ENCODE measurements at regions of chr11 and their contacts with region 1.

Region 1: DNA sequence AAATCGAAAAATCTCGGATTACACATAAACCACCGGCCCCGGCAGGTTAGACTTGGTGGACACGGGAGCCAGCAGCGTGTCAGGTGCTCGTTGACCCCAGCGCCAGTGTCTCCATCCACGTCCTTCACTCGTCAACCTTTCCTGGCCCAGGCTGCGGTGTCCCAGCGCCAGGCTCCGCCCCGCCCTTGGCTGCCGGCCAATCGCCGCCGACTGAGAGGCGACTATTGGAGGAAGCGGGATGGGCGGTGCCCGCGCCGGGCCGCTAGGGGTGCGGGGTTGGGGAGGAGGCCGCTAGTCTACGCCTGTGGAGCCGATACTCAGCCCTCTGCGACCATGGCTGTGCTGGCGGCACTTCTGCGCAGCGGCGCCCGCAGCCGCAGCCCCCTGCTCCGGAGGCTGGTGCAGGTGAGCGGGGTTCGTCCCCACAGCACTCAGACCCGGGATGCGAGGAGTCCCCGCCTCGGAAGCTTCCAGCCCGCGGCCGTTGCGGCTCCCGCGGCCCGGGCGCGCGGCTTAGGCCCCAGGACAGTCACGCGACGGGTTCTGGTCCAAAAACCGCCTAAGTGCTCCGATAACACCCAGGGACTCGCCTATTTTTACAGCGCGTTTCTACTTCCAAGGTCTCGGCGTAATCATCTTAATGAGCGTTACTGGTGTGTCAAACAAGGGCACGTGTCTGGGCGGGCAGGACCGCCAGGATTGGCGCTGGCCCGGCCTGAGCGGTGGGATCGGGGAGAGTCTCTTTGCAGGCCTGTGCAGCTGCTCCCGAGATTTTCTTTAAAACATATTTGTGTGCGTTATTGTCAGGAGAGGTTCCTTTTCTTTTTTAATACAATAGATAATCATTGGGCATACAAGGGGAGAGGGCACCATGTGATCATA is at the start of gene ACAT1:
- DNase-seq: peak; percentile 88 to 94
- H3K4me3 ChIP-seq: peak within 1 kb of the TSS; percentile 92
- H3K27ac ChIP-seq: no peak within 1 kb of the TSS
- H3K4me1 ChIP-seq: peaks cover 12% of the 10 kb centered on the region
- H3K27me3 ChIP-seq: no peaks in the 10 kb centered on the region
- CTCF ChIP-seq: peak; percentile 62
- total RNA-seq, gene ACAT1: 31.8 and 34.4 TPM in 2 replicates

Region 2: GRCh38 chr11:107563702-107564101 is 557.8 kb before region 1 on chr11:
- CTCF ChIA-PET with region 1: no interaction called
- POLR2A ChIA-PET with region 1: no interaction called
- intact Hi-C with region 1: loop called (anchors 5 kb)
- DNase-seq: peak; percentile 20 to 60
- H3K4me3 ChIP-seq: peak overlapping the region; percentile 83; the same call in 1 of the 2 replicates
- H3K27ac ChIP-seq: peak overlapping the region; percentile 87
- H3K4me1 ChIP-seq: peaks cover 47% of the 10 kb centered on the region
- H3K27me3 ChIP-seq: no peaks in the 10 kb centered on the region
- CTCF ChIP-seq: peak; percentile 85

Region 3: DNA sequence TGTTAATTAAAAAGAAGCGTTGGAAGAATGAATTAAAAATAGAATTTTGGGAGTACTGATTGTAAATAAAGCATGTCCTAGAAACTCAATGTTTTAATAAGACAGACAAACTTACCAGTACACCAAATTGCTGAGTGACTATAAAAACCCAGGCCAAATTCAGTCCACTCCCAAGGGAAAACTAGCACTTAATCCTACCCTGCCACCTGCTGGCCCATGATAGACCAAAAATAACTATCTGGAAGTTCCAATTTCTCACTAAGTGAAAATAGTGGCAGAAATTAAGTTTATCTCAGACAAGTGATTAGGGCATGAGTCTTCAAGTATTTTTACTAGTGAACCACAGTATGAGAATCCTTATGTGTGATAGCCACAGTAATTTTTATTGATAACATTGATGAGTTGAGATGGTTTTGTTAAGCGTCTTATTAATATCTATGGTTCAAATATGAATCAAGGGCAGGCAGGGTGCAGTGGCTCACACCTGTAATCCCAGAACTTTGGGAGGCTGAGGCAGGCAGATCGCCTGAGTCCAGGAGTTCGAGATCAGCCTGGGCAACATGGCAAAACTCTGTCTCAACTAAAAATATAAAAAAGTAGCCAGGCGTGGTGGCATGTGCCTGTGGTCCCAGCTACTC is 533.6 kb after region 1 on chr11:
- CTCF ChIA-PET with region 1: interaction called, 3 read pairs
- POLR2A ChIA-PET with region 1: no interaction called
- intact Hi-C with region 1: loop called (anchors 2 kb)
- DNase-seq: peak; percentile 47 to 60
- H3K4me3 ChIP-seq: no peak overlapping the region
- H3K27ac ChIP-seq: no peak overlapping the region
- H3K4me1 ChIP-seq: no peaks in the 10 kb centered on the region
- H3K27me3 ChIP-seq: no peaks in the 10 kb centered on the region
- CTCF ChIP-seq: peak; percentile 93

Measured in PC-9 (cell line).